K562 (cell line): ENCODE measurements at regions of chr1 and their contacts with region 1.

Region 1: DNA sequence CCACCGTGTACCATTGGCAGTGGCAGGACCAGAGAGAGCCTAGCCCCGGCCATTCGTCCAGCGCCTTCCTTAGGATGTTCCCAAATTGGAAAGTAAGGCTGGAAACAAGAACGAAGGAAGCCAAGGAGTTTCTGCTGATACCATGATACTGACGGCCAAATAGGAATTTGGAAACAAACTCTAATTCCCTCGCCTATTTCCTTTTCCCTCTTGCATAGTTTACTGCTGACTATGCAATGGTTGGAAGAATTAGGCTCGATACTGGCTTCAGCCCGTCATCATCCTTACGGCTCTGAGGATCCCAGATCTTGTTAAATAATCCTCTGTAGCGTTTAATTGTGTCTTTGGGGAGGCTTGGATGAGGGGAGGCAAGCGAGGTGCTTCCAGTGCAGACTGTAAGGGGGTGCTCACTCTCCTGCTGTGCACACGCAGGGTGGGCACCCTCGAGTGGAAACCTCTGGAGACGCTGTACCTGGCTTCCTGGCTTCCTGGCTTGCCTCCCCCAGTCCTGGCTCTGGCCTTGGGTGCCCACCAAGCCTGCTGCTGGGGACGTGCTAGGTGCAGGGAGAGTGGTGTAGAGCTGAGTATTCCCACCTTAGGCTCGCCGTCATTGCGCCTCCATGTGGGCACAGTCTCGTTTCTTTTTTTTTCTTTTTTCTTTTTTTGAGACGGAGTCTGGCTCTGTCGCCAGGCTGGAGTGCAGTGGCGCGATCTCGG is 27.4 kb upstream of the CAMTA1 start:
- DNase-seq: peak in 1 of 4 experiments; percentile 37
- ATAC-seq: peak; percentile 86
- H3K4me3 ChIP-seq: peak overlapping the region; percentile 3; the same call in 1 of the 2 replicates
- H3K27ac ChIP-seq: no peak overlapping the region
- H3K4me1 ChIP-seq: peaks cover 3 to 9% of the 10 kb centered on the region in 2 experiments; a peak in 3 of 5 replicates
- H3K27me3 ChIP-seq: peaks cover 30 to 67% of the 10 kb centered on the region in 2 experiments
- CTCF ChIP-seq: no peak
- EP300 ChIP-seq: no peak
- POLR2A ChIP-seq: no peak
- RAD21 ChIP-seq: no peak; a peak in 1 of 4 replicates

Region 2: GRCh38 chr1:5718831-5719632 is 1038.8 kb before region 1 on chr1:
- CTCF ChIA-PET with region 1: no interaction called
- POLR2A ChIA-PET with region 1: no interaction called
- in situ Hi-C with region 1: no loop called
- intact Hi-C with region 1: no loop called
- DNase-seq: no peak
- ATAC-seq: peak; percentile 47
- H3K4me3 ChIP-seq: no peak overlapping the region
- H3K27ac ChIP-seq: no peak overlapping the region
- H3K4me1 ChIP-seq: no peaks in the 10 kb centered on the region
- H3K27me3 ChIP-seq: peaks cover 21 to 48% of the 10 kb centered on the region in 2 experiments; a peak in 4 of 5 replicates
- CTCF ChIP-seq: peak in 2 of 3 experiments; percentile 24 to 32; a peak in 2 of 6 replicates
- EP300 ChIP-seq: no peak
- POLR2A ChIP-seq: no peak
- RAD21 ChIP-seq: peak in 1 of 2 experiments; percentile 21; a peak in 1 of 4 replicates

Region 3: DNA sequence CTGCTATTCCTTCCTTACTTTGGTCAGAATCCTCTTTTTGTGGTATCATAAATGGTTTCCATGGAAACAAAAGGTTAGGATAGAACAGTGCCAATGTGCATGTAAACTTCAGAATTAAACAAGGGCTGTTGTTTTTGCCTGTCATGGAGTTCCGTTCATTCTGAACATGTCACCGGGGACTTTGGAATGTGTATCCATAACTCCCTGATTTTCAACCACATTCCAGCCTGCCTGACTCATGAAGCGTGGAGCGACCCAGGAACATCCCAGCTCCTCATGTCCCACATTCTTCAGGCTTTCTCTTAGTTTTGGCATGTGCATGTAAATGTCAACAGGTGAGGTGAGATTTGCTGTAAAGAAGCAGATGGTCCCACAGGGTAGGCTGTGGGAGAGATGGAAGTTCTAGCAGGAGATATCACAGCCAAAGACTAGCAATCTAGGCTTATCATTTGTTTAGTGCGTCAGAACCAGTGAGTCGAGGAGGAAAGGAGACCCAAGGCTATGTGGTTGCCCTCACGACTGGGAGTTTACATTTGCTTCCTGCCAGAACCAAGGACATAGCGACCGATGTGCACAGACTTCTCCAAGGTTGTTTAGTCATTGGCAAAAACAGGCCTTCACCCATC is 33.2 kb before region 1 on chr1:
- CTCF ChIA-PET with region 1: no interaction called
- POLR2A ChIA-PET with region 1: no interaction called
- in situ Hi-C with region 1: no loop called
- intact Hi-C with region 1: no loop called
- DNase-seq: peak in 1 of 4 experiments; percentile 2
- ATAC-seq: no peak
- H3K4me3 ChIP-seq: no peak overlapping the region
- H3K27ac ChIP-seq: no peak overlapping the region
- H3K4me1 ChIP-seq: 0 out of 5 replicates have a peak, but pooled peaks cover 0 to 3% of the 10 kb centered on the region in 2 experiments
- H3K27me3 ChIP-seq: peaks cover 15 to 38% of the 10 kb centered on the region in 2 experiments; a peak in 4 of 5 replicates
- CTCF ChIP-seq: no peak
- EP300 ChIP-seq: no peak
- POLR2A ChIP-seq: no peak
- RAD21 ChIP-seq: no peak

Region 4: GRCh38 chr1:6784560-6785317 is 26.9 kb after region 1 on chr1:
- CTCF ChIA-PET with region 1: no interaction called
- POLR2A ChIA-PET with region 1: interaction called, 10 read pairs
- in situ Hi-C with region 1: no loop called
- intact Hi-C with region 1: no loop called
- DNase-seq: peak; percentile 99 to 100 (median 100)
- ATAC-seq: peak; percentile 94
- H3K4me3 ChIP-seq: peak overlapping the region; percentile 96
- H3K27ac ChIP-seq: peak overlapping the region; percentile 97
- H3K4me1 ChIP-seq: peaks cover 13 to 23% of the 10 kb centered on the region in 2 experiments; a peak in 4 of 5 replicates
- H3K27me3 ChIP-seq: no peaks in the 10 kb centered on the region
- CTCF ChIP-seq: no peak
- EP300 ChIP-seq: no peak
- POLR2A ChIP-seq: peak; percentile 94
- RAD21 ChIP-seq: no peak

Region 5: DNA sequence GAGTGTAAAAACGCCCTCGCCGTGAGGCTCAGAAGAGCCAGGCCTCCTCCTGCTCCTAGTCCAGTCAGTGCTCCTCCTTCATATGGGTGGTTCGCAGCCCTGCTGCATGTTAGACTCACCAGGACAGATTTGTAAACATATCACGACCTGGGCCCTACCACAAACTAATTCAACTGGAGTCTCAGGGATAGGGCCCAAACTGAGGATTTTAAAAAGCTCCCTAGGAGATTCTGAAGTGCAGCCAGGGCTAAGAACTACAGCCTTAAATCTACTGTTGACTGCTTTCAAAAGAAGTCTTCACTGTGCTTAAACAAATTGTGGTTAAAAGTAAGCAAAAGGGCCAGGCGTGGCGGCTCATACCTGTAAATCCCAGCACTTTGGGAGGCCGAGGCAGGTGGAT is 84.4 kb after region 1 on chr1:
- CTCF ChIA-PET with region 1: no interaction called
- POLR2A ChIA-PET with region 1: no interaction called
- in situ Hi-C with region 1: no loop called
- intact Hi-C with region 1: no loop called
- DNase-seq: no peak
- ATAC-seq: no peak
- H3K4me3 ChIP-seq: no peak overlapping the region
- H3K27ac ChIP-seq: no peak overlapping the region
- H3K4me1 ChIP-seq: no peaks in the 10 kb centered on the region
- H3K27me3 ChIP-seq: no peaks in the 10 kb centered on the region
- CTCF ChIP-seq: no peak
- EP300 ChIP-seq: no peak
- POLR2A ChIP-seq: no peak
- RAD21 ChIP-seq: no peak